Heart right ventricle (tissue), 16 donors: ENCODE measurements at regions of chr12 and their contacts with region 1.

Region 1: GRCh38 chr12:12081836-12082497 is 11.2 kb downstream of the BCL2L14 start:
- DNase-seq: peak in 1 of 2 donors; percentile 5
- ATAC-seq: peak; percentile 73 to 93 (median 86)
- H3K4me3 ChIP-seq: no peak overlapping the region
- H3K27ac ChIP-seq: peak overlapping the region in 8 of 10 donors; percentile 59 to 89 (median 70)
- H3K4me1 ChIP-seq: peaks cover 0 to 14% (median 9%) of the 10 kb centered on the region in 9 donors
- H3K27me3 ChIP-seq: no peaks in the 10 kb centered on the region
- CTCF ChIP-seq: peak; percentile 19 to 65 (median 42)

Region 2: DNA sequence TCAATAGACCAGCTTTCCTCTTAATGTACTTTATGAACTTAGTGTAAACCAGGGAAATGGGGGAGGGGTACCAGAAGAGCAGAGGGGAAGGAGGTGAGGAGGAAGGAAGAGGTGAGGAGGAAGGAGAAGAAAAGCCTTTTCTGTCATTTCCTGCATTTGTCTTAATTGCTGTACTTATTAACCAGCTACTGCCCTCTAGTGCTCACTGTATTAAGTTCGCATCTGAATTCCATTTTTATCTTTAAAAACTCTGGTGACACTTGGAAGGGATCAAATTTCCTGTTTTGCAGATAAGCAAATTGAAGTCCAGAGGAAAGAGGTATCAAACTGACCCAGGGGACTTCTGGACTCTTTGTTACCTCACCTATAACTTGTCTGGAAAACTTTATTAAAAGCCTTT is 245.8 kb after region 1 on chr12:
- intact Hi-C with region 1: loop called in 8 of 10 experiments (anchors 2 to 5 kb)
- DNase-seq: peak in 1 of 2 donors; percentile 34
- ATAC-seq: peak in 6 of 8 donors; percentile 46 to 64 (median 53)
- H3K4me3 ChIP-seq: no peak overlapping the region
- H3K27ac ChIP-seq: peak overlapping the region in 4 of 10 donors; percentile 40 to 49 (median 48)
- H3K4me1 ChIP-seq: peaks cover 0 to 16% (median 5%) of the 10 kb centered on the region in 9 donors
- H3K27me3 ChIP-seq: no peaks in the 10 kb centered on the region
- CTCF ChIP-seq: peak; percentile 50 to 81 (median 73)

Region 3: GRCh38 chr12:12334367-12335040 is 252.5 kb after region 1 on chr12:
- intact Hi-C with region 1: loop called in 9 of 10 experiments (anchors 2 to 5 kb)
- DNase-seq: peak; percentile 32 to 51
- ATAC-seq: peak; percentile 21 to 65 (median 54)
- H3K4me3 ChIP-seq: no peak overlapping the region
- H3K27ac ChIP-seq: no peak overlapping the region
- H3K4me1 ChIP-seq: peaks cover 0 to 33% (median 19%) of the 10 kb centered on the region in 9 donors
- H3K27me3 ChIP-seq: no peaks in the 10 kb centered on the region
- CTCF ChIP-seq: peak; percentile 80 to 90 (median 86)